ENCODE measurements at regions of chr1 and their contacts with region 1.

Region 1: GRCh38 chr1:179731628-179732027 is 11.5 kb upstream of the FAM163A start:
- DNase-seq: no peak
- H3K4me3 ChIP-seq: no peak overlapping the region
- CTCF ChIP-seq: no peak
- POLR2A ChIP-seq: no peak

Region 2: GRCh38 chr1:179305450-179305849 is 426.2 kb before region 1 on chr1:
- intact Hi-C with region 1: loop called (anchors 10 kb)
- DNase-seq: no peak
- H3K4me3 ChIP-seq: no peak overlapping the region
- CTCF ChIP-seq: no peak
- POLR2A ChIP-seq: no peak

Measured in lower leg skin (tissue), 4 donors.